Activated CD8-positive, alpha-beta T cell treated with anti-CD3 and anti-CD28 coated beads, Interleukin-2, amount 10 ng/mL, durations not matched to agents 7 days and 5 days (primary cell): ENCODE measurements at regions of chr2 and their contacts with region 1.

Region 1: DNA sequence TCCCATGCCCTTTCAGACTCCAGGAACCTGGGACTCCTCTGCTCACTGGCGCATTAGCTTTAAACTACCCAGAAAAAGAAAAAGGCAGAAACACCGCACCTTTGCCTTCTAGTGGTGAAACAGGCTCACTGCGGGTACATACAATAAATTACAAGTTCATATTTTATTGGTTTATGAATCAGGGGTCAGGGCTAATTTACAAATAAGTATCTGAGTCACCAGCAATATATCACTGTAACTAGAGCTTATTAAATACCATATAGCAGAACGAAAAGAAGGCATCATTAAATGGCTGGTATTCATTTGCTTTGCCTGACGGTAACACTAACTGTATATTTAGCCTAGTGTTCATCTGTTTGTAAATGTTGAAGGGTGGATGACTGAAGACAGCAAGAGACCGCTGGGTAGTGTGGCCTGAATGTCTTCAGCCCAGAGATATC is 26.9 kb upstream of the DTNB start:
- DNase-seq: peak; percentile 53
- ATAC-seq: peak; percentile 51
- H3K4me3 Mint-ChIP-seq: no peak overlapping the region
- H3K27ac Mint-ChIP-seq: no peak overlapping the region
- H3K4me1 Mint-ChIP-seq: no peaks in the 10 kb centered on the region
- H3K27me3 Mint-ChIP-seq: peaks cover 3% of the 10 kb centered on the region

Region 2: DNA sequence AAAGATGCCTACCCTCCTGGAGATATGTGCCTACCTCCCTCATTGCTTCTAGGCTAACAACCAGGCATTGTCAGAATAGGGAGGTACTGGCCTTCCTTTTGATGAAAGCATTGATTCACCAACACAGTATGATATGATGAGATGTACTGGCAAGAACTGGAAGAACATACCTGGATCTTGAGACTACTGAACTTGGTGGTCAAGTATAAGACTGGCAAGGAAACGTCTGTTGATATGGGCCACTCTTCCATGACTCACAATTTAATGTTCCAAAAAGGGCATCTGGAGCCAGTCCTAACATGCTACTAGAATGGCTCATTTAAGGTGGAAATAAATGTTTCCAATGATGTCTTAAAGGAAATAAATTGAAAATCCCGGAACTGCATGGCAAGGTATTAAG is 44.9 kb before region 1 on chr2:
- CTCF ChIA-PET with region 1: no interaction called
- POLR2A ChIA-PET with region 1: no interaction called
- DNase-seq: no peak
- ATAC-seq: no peak
- H3K4me3 Mint-ChIP-seq: no peak overlapping the region
- H3K27ac Mint-ChIP-seq: no peak overlapping the region
- H3K4me1 Mint-ChIP-seq: peaks cover 9% of the 10 kb centered on the region
- H3K27me3 Mint-ChIP-seq: no peaks in the 10 kb centered on the region

Region 3: DNA sequence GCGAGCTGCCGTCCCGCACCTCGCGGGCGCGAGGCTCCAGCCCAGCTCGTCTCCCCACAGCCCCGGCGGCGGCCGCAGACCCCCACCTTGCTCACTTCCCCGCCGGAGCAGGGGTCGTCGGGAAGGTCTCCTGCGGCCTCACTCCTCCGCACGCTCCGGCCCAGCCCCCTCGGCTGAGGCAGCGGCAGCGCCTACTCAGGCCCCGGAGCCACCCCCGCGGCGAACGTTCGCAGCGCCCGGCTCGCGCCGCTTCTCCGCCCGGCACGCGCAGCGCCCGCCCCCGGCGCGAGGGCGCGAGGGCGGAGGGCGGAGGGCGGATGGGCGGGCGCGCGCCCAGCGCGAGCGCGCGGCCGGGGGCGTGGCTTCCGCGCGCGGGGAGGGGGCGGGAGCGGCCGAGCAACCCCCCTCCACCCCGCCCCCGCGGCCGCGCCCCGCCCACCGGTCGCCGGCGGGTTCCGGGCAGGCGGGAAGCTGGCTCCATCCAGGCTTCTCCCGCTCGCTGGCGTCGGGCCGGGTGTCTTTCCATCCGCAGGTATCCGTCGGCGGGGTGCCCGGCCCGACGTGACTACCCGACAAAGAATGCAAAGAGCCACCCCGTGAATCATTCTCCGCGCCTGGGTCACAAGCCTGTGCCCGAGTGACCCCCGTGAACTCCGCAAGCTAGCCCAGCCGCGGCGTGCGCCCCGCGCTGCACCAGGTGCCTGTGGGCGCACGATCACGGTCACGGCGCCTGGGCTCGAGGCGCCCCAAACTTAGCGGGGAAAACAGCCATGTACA is 26.8 kb before region 1 on chr2 and contains the start of gene DTNB:
- CTCF ChIA-PET with region 1: interaction called, 12 read pairs
- POLR2A ChIA-PET with region 1: interaction called, 5 read pairs
- DNase-seq: peak; percentile 79
- ATAC-seq: peak; percentile 83
- H3K4me3 Mint-ChIP-seq: peak within 1 kb of the TSS; percentile 81
- H3K27ac Mint-ChIP-seq: peak within 1 kb of the TSS; percentile 72
- H3K4me1 Mint-ChIP-seq: peaks cover 22% of the 10 kb centered on the region
- H3K27me3 Mint-ChIP-seq: peaks cover 20% of the 10 kb centered on the region
- total RNA-seq, gene DTNB: 29.2 to 31.2 TPM

Region 4: GRCh38 chr2:25690058-25690457 is 10.2 kb before region 1 on chr2:
- CTCF ChIA-PET with region 1: interaction called, 35 read pairs
- POLR2A ChIA-PET with region 1: no interaction called
- DNase-seq: no peak
- ATAC-seq: no peak
- H3K4me3 Mint-ChIP-seq: no peak overlapping the region
- H3K27ac Mint-ChIP-seq: no peak overlapping the region
- H3K4me1 Mint-ChIP-seq: no peaks in the 10 kb centered on the region
- H3K27me3 Mint-ChIP-seq: peaks cover 3% of the 10 kb centered on the region

Region 5: GRCh38 chr2:25714740-25715139 is 14.5 kb after region 1 on chr2:
- CTCF ChIA-PET with region 1: interaction called, 20 read pairs
- POLR2A ChIA-PET with region 1: interaction called, 3 read pairs
- DNase-seq: no peak
- ATAC-seq: no peak
- H3K4me3 Mint-ChIP-seq: no peak overlapping the region
- H3K27ac Mint-ChIP-seq: no peak overlapping the region
- H3K4me1 Mint-ChIP-seq: peaks cover 15% of the 10 kb centered on the region
- H3K27me3 Mint-ChIP-seq: peaks cover 15% of the 10 kb centered on the region